OCI-LY7 (cell line): ENCODE measurements at regions of chr13 and their contacts with region 1.

Region 1: GRCh38 chr13:29435125-29435911 is 160.2 kb downstream of the SLC7A1 start:
- DNase-seq: no peak
- H3K4me3 ChIP-seq: peak overlapping the region; percentile 25
- H3K27ac ChIP-seq: peak overlapping the region; percentile 95
- H3K4me1 ChIP-seq: peaks cover 55% of the 10 kb centered on the region
- CTCF ChIP-seq: no peak

Region 2: DNA sequence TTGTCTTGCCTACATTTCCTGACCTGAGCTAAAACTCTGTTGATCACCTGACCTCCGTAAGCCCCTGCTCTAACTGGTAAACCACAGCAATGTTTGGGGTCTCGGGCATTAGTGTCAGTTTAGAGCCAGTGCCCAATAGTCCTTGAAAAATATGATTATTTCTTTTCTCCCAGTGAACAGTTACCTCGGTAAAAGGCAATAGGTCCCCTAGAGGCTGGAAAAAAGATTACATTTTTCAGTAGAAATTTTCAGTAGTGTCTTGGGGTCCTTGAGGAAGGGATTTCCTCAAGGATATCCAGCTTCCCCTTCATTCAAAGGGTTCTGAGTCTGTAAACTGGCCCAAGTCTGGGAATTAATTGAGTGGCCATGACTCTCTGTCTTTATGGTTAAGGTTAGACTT is 17.3 kb before region 1 on chr13:
- CTCF ChIA-PET with region 1: no interaction called
- POLR2A ChIA-PET with region 1: interaction called, 19 read pairs
- intact Hi-C with region 1: no loop called
- DNase-seq: no peak
- H3K4me3 ChIP-seq: no peak overlapping the region
- H3K27ac ChIP-seq: no peak overlapping the region
- H3K4me1 ChIP-seq: no peaks in the 10 kb centered on the region
- CTCF ChIP-seq: peak; percentile 55

Region 3: DNA sequence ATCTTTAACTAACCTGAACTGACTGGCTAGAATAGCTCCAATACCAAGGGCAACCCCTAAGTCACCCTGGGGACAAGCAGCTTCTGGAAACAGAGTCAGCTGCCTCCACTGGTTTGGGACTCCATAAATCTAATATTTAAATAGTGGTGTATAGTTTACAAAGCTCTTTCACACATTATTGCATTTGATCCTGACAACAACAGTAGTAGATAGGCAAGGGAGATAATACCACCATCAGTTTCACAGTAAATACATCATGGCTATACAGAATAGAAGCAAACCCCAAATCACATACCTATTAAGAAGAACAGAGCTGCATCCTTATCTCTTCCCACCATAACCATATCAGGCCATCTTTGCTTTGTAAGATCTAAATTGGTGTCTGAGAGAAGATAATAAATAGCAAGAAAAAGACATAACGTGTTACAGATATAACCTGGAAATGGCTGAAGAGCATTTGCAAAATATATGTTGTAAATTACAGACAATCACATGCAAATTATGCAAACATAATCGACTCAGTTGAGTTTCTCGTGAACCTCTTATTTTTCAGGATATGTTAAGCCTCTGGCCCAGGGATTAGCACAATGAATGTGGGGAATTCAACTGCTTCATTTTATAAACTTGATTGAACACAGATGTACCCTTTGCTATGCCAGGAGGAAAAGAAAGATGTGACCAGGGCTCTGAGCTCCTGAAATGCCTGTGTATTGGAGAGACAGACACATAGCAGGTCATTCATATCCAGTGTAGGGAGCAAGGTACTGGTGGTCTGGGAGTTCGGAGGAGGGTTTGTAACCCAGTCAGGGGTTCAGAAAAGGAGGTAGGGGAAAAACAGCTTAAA is 17.7 kb after region 1 on chr13:
- CTCF ChIA-PET with region 1: interaction called, 4 read pairs
- POLR2A ChIA-PET with region 1: interaction called, 33 read pairs
- intact Hi-C with region 1: no loop called
- DNase-seq: no peak
- H3K4me3 ChIP-seq: no peak overlapping the region
- H3K27ac ChIP-seq: no peak overlapping the region
- H3K4me1 ChIP-seq: peaks cover 5% of the 10 kb centered on the region
- CTCF ChIP-seq: no peak